Activated CD8-positive, alpha-beta memory T cell treated with anti-CD3 and anti-CD28 coated beads, Interleukin-2, amount 10 ng/mL, durations not matched to agents 7 days and 5 days (primary cell): ENCODE measurements at regions of chr2 and their contacts with region 1.

Region 1: GRCh38 chr2:202278944-202279343 is 13.4 kb downstream of the NOP58 start:
- DNase-seq: no peak
- ATAC-seq: no peak
- H3K4me3 Mint-ChIP-seq: no peak overlapping the region
- H3K27ac Mint-ChIP-seq: no peak overlapping the region
- H3K4me1 Mint-ChIP-seq: peaks cover 32% of the 10 kb centered on the region
- H3K27me3 Mint-ChIP-seq: no peaks in the 10 kb centered on the region

Region 2: GRCh38 chr2:201458381-201458780 is 820.6 kb before region 1 on chr2:
- CTCF ChIA-PET with region 1: no interaction called
- DNase-seq: no peak
- ATAC-seq: no peak
- H3K4me3 Mint-ChIP-seq: no peak overlapping the region
- H3K27ac Mint-ChIP-seq: no peak overlapping the region
- H3K4me1 Mint-ChIP-seq: no peaks in the 10 kb centered on the region
- H3K27me3 Mint-ChIP-seq: no peaks in the 10 kb centered on the region

Region 3: DNA sequence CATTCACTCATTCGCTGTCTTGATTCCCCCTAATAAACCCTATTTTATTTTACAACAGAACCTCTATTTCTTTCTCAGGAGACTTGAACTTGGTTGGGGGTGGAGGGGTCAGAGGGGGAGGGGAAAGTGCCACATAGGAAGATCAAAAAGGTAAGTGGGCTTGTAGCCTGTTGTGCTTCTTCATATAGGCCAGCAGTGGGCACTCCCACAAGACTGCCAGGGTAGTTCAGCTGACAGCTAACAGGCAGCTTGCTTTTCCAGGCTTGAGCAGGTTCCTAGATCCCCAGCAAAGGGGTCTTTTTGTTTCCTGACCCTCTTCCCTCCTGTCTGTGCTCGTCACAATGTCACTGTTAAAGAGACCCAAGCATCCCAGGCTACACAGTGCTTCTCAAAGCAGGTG is 206.7 kb before region 1 on chr2:
- CTCF ChIA-PET with region 1: no interaction called
- DNase-seq: no peak
- ATAC-seq: no peak
- H3K4me3 Mint-ChIP-seq: no peak overlapping the region
- H3K27ac Mint-ChIP-seq: no peak overlapping the region
- H3K4me1 Mint-ChIP-seq: peaks cover 4% of the 10 kb centered on the region
- H3K27me3 Mint-ChIP-seq: peaks cover 4% of the 10 kb centered on the region

Region 4: GRCh38 chr2:202265467-202266277 is 13.3 kb before region 1 on chr2 and contains the start of gene NOP58:
- CTCF ChIA-PET with region 1: interaction called, 14 read pairs
- DNase-seq: peak; percentile 96
- ATAC-seq: peak; percentile 83
- H3K4me3 Mint-ChIP-seq: peak within 1 kb of the TSS; percentile 43
- H3K27ac Mint-ChIP-seq: peak within 1 kb of the TSS; percentile 64
- H3K4me1 Mint-ChIP-seq: peaks cover 21% of the 10 kb centered on the region
- H3K27me3 Mint-ChIP-seq: no peaks in the 10 kb centered on the region
- total RNA-seq, gene NOP58: 121 to 143 TPM